ENCODE measurements at regions of chr15 and their contacts with region 1.

Region 1: DNA sequence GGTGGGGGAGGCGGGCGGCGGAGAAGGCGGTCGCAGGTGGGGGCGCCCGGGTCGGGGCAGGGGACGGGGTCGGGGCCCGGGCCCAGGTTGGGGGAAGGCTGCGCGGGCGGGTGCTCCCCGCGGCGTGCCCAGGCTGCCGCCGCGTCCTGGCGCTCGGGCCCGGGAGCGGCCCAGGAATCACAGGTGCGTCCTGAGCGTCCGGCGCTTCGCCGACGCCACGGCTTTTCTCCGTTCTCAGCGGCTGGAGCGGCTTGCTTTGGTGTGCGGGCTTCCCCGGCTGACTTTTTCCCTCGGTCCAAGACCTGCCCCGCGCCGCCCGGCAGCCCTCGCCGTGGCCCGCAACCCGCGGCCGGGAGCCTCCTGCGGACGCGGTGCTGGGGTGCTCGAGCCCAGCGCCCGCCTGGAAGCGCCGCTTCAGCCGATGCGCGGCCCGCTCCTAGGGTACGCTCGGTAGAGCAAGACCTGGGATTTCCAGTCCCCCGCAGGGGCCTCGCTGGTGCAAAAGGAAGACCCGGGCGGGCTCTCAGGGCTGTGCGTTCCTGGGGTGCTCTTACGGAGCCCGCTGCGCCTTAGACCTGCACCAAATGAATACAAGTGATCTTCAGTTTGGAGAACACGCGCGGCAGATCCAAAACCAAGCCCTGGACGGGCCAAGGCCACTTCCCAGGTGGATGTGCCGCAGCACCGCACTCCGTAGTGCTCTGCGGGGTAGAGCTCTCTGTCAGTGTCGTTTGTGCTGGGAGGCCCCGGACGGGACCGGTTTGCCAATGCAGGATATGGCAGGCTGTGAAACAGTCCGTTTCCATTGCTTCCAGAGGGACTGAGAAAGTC is 639 bp downstream of the NIPA1 start:
- DNase-seq: peak; percentile 15
- H3K4me3 Mint-ChIP-seq: peak overlapping the region; percentile 71
- H3K27ac Mint-ChIP-seq: no peak overlapping the region
- H3K4me1 Mint-ChIP-seq: peaks cover 9% of the 10 kb centered on the region
- H3K27me3 Mint-ChIP-seq: no peaks in the 10 kb centered on the region

Region 2: DNA sequence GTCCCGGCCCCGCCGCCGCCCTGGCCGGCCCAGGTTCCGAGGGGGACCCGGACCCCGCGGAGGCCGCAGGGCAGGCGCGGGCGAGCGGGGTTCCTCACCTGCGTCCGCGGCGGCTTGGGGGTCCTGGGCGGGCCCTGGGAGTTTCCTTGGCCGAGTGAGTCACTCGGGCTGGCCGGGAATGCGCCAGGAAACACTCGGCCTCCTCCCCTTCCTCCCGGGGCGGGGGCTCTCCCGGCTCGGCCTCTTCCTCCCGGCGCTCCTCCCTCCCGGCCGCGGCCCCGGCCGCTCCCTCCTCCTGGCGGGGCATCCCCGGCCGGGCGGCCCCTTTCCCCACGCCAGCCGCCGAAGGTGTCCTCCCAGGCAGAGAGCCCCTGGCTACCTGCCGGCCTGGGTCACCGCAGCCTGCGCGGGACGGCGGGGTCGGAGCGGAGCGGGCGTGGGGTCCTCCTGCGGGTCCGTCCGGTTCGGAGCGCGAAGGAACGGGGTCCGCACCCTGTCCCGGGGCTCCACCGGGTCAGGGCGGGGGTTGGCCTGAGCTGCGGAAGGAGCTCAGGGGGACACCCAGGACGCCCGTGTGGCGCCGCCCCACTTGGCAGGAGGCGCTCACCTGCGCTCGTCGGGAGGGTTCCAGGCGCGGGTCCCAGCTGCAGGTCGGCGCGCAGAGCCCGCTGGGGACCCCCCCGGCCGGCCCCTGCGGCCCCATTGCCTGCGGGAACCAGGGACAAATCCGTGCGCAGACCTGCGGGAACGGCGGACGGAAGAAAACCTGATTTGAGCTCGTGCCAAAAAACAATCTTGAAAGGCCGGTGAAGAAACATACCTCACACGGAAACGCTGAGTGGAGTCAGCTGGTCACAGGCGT is 193.3 kb after region 1 on chr15 and contains the start of gene CYFIP1:
- CTCF ChIA-PET with region 1: no interaction called
- intact Hi-C with region 1: loop called (anchors 5 kb)
- DNase-seq: peak; percentile 52
- H3K4me3 Mint-ChIP-seq: peak within 1 kb of the TSS; percentile 91
- H3K27ac Mint-ChIP-seq: no peak within 1 kb of the TSS
- H3K4me1 Mint-ChIP-seq: peaks cover 6% of the 10 kb centered on the region
- H3K27me3 Mint-ChIP-seq: peaks cover 20% of the 10 kb centered on the region
- total RNA-seq, gene CYFIP1: 34.0 to 35.1 TPM